Posterior vena cava (tissue), 2 donors: ENCODE measurements at regions of chr2 and their contacts with region 1.

Region 1: GRCh38 chr2:188404341-188405004 is 112.8 kb downstream of the GULP1 start:
- DNase-seq: peak; percentile 72

Region 2: GRCh38 chr2:189515264-189515663 is 1110.8 kb after region 1 on chr2:
- intact Hi-C with region 1: loop called in 1 of 2 experiments (anchors 10 kb)
- DNase-seq: no peak